Mammary epithelial cell (primary cell): ENCODE measurements at regions of chr1 and their contacts with region 1.

Region 1: GRCh38 chr1:89454845-89455521 is 69.6 kb upstream of the LRRC8B start:
- DNase-seq: peak; percentile 66
- H3K4me3 ChIP-seq: no peak overlapping the region
- H3K27ac ChIP-seq: peak overlapping the region; percentile 36
- H3K4me1 ChIP-seq: peaks cover 39% of the 10 kb centered on the region
- H3K27me3 ChIP-seq: no peaks in the 10 kb centered on the region
- CTCF ChIP-seq: peak; percentile 50 to 64

Region 2: GRCh38 chr1:88998716-88999115 is 456.3 kb before region 1 on chr1:
- CTCF ChIA-PET with region 1: no interaction called
- dilution Hi-C with region 1: no loop called
- in situ Hi-C with region 1: loop called in 1 of 2 experiments (anchors 5 kb)
- intact Hi-C with region 1: loop called (anchors 1 kb)
- DNase-seq: peak; percentile 60
- H3K4me3 ChIP-seq: no peak overlapping the region
- H3K27ac ChIP-seq: no peak overlapping the region
- H3K4me1 ChIP-seq: peaks cover 12% of the 10 kb centered on the region
- H3K27me3 ChIP-seq: no peaks in the 10 kb centered on the region
- CTCF ChIP-seq: peak; percentile 19 to 49

Region 3: GRCh38 chr1:89499320-89499719 is 44.3 kb after region 1 on chr1:
- CTCF ChIA-PET with region 1: no interaction called
- dilution Hi-C with region 1: no loop called
- in situ Hi-C with region 1: no loop called
- intact Hi-C with region 1: no loop called
- DNase-seq: no peak
- H3K4me3 ChIP-seq: no peak overlapping the region
- H3K27ac ChIP-seq: no peak overlapping the region
- H3K4me1 ChIP-seq: no peaks in the 10 kb centered on the region
- H3K27me3 ChIP-seq: no peaks in the 10 kb centered on the region
- CTCF ChIP-seq: no peak

Region 4: DNA sequence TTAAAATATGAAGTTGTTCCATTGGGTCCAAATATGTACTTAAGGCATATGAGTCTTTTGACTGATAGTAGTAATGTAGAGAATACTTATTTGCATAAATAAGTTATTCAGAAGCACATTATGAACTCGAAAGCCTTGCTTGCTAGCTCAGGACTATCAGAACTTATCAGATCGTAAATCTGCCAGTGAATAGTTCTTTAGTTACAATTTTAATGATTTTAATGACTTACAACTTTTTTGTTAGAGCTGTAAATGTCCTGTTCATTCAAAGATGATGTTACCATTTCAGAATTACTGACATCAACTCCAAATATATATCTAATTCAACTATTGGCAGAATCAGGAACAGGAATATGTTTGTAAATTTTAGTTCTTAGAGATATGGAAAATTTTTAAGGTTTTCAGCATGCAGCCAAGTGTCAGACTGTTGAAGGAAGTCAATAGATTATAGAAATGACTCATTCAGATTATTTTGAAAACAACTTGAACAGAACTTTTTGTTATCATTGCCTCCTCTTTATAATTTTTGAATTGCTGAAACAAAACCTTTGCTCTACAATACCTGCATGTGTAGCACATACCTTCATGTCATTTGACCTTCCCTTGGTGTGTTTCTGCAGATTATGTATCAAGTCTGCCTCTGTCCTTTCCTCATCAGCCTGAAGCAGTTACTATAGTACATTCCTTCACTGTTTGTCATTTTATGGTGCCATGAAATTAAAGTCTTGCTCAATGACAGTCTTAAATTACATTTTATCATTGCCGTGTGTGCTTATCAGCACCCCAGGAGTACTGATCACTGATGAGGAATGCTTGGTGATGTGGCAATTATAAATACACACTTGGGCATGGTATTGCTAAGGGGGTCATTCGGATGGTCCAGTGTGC is 410.8 kb after region 1 on chr1:
- CTCF ChIA-PET with region 1: no interaction called
- dilution Hi-C with region 1: no loop called
- in situ Hi-C with region 1: no loop called
- intact Hi-C with region 1: no loop called
- DNase-seq: peak; percentile 69
- H3K4me3 ChIP-seq: no peak overlapping the region
- H3K27ac ChIP-seq: peak overlapping the region; percentile 23
- H3K4me1 ChIP-seq: peaks cover 13% of the 10 kb centered on the region
- H3K27me3 ChIP-seq: no peaks in the 10 kb centered on the region
- CTCF ChIP-seq: no peak

Region 5: GRCh38 chr1:90149101-90149500 is 694.1 kb after region 1 on chr1:
- CTCF ChIA-PET with region 1: no interaction called
- dilution Hi-C with region 1: no loop called
- in situ Hi-C with region 1: no loop called
- intact Hi-C with region 1: no loop called
- DNase-seq: no peak
- H3K4me3 ChIP-seq: no peak overlapping the region
- H3K27ac ChIP-seq: no peak overlapping the region
- H3K4me1 ChIP-seq: no peaks in the 10 kb centered on the region
- H3K27me3 ChIP-seq: no peaks in the 10 kb centered on the region
- CTCF ChIP-seq: no peak